ENCODE measurements at regions of chr18 and their contacts with region 1.

Region 1: GRCh38 chr18:79458131-79458838 is 62.6 kb downstream of the NFATC1 start:
- DNase-seq: no peak
- ATAC-seq: peak; percentile 90

Region 2: GRCh38 chr18:79507076-79507545 is 48.8 kb after region 1 on chr18:
- intact Hi-C with region 1: loop called (anchors 2 kb)
- DNase-seq: peak; percentile 86
- ATAC-seq: peak; percentile 92

Region 3: GRCh38 chr18:79517341-79517740 is 59.1 kb after region 1 on chr18:
- intact Hi-C with region 1: no loop called
- DNase-seq: no peak
- ATAC-seq: no peak

Measured in Right ventricle myocardium inferior (tissue), 1 donor.